ENCODE measurements at regions of chrX and their contacts with region 1.

Region 1: DNA sequence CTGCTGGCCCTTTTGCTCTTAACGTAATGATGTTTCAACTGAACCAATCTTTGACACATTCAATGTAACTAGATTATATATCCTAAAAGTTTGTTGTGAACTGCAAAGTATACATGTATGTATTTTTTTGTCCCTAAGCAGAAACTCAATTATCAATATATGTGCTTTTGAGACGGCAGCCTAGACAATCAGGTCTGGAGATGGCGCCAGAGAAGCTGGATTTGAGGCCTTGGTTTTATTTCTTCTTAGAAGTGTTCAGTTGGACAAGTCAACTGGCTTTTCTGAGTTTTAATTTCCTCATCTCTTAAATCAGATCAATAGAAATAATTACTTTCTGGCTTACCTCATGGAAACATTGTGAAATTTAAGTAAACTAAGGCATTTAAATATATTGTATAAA is 62.5 kb downstream of the DCAF8L1 start:
- DNase-seq: peak; percentile 6
- H3K4me3 ChIP-seq: no peak overlapping the region
- H3K27ac ChIP-seq: no peak overlapping the region
- H3K4me1 ChIP-seq: no peaks in the 10 kb centered on the region
- H3K27me3 ChIP-seq: no peaks in the 10 kb centered on the region
- CTCF ChIP-seq: peak; percentile 24 to 60

Region 2: GRCh38 chrX:27903960-27904359 is 14.8 kb before region 1 on chrX:
- CTCF ChIA-PET with region 1: no interaction called
- dilution Hi-C with region 1: no loop called
- in situ Hi-C with region 1: no loop called
- intact Hi-C with region 1: no loop called
- DNase-seq: no peak
- H3K4me3 ChIP-seq: no peak overlapping the region
- H3K27ac ChIP-seq: no peak overlapping the region
- H3K4me1 ChIP-seq: peaks cover 4% of the 10 kb centered on the region
- H3K27me3 ChIP-seq: no peaks in the 10 kb centered on the region
- CTCF ChIP-seq: no peak

Region 3: DNA sequence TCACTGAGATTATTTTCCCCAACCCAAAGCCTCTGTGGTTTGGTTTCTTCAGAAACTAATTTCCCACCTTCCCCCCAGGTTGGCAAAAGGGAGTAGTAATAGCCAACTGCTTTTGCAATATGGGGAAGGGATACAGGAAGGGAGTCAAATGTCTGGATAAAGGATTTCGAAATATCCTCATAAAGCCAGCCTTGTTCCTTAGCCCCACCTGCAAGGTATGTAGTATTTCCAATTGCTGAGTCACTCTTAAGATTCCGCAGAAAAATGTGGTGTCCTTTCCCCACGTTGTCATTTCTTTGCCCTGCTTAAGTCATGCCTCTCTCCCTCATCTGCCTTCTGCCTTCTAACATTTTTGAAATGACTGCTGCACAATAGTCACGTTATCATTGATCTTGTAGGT is 201.3 kb after region 1 on chrX:
- CTCF ChIA-PET with region 1: no interaction called
- dilution Hi-C with region 1: no loop called
- in situ Hi-C with region 1: no loop called
- intact Hi-C with region 1: loop called (anchors 10 kb)
- DNase-seq: peak; percentile 84
- H3K4me3 ChIP-seq: no peak overlapping the region
- H3K27ac ChIP-seq: peak overlapping the region; percentile 55
- H3K4me1 ChIP-seq: peaks cover 14% of the 10 kb centered on the region
- H3K27me3 ChIP-seq: no peaks in the 10 kb centered on the region
- CTCF ChIP-seq: no peak

Region 4: GRCh38 chrX:28693101-28693500 is 774.3 kb after region 1 on chrX:
- CTCF ChIA-PET with region 1: no interaction called
- dilution Hi-C with region 1: no loop called
- in situ Hi-C with region 1: no loop called
- intact Hi-C with region 1: no loop called
- DNase-seq: no peak
- H3K4me3 ChIP-seq: no peak overlapping the region
- H3K27ac ChIP-seq: no peak overlapping the region
- H3K4me1 ChIP-seq: no peaks in the 10 kb centered on the region
- H3K27me3 ChIP-seq: no peaks in the 10 kb centered on the region
- CTCF ChIP-seq: no peak

Measured in mammary epithelial cell (primary cell).